HCT116 (cell line): ENCODE measurements at regions of chr1 and their contacts with region 1.

Region 1: GRCh38 chr1:87131809-87132283 is 196.8 kb upstream of the LMO4 start:
- DNase-seq: peak; percentile 35
- ATAC-seq: peak; percentile 99
- H3K4me3 ChIP-seq: peak overlapping the region; percentile 21 to 39; a peak in 3 of 4 replicates
- H3K27ac ChIP-seq: no peak overlapping the region
- H3K4me1 ChIP-seq: peaks cover 0 to 4% of the 10 kb centered on the region in 2 experiments; a peak in 1 of 4 replicates
- H3K27me3 ChIP-seq: no peaks in the 10 kb centered on the region
- CTCF ChIP-seq: peak; percentile 64 to 89 (median 85)
- POLR2A ChIP-seq: no peak
- RAD21 ChIP-seq: peak; percentile 95

Region 2: DNA sequence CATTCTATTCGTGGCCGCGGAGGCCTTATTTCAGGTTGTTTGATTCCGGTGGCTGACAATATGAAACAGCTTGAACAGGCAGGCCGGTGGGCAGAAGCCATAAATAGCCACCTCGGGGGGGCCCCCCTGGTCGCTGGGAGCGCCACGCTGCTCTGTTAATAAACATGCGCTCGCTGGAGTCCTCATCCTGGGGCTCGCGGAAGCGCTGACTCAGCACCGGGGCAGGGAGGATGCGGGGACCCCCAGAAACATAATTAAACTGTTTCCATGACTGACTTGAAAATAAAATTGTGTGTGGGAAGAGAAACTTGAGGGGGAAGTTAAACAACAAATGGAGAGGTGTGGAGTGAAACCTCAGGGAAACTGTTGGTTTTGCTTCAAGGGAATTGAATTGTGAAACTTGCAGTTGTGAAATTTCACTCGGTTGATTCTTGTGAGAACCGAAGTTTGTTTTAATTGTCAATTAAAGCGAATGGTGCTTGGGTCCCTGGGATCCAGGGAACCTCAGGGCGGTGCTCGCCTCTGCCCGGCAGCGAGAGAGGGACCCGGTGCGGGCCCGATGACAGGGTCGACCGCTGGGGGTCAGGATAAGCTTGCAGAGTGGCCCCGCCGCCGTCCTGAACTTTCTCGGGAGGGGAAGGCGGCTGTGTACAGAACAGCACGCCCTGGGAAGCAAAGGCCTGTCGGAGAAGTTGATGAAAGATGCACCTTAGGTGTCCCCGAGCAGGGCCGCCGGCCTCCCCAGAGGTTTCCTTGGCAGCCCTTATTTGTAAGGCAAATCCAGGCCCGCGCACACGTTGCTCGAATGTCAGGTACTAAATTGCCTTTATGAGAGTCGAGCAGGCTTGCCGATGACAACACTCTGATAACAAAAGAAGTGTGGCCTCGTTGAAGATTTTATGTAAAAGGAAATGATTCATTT is 19.9 kb after region 1 on chr1:
- CTCF ChIA-PET with region 1: no interaction called
- POLR2A ChIA-PET with region 1: no interaction called
- RAD21 ChIA-PET with region 1: no interaction called
- intact Hi-C with region 1: no loop called
- DNase-seq: no peak
- ATAC-seq: no peak
- H3K4me3 ChIP-seq: no peak overlapping the region
- H3K27ac ChIP-seq: no peak overlapping the region
- H3K4me1 ChIP-seq: no peaks in the 10 kb centered on the region
- H3K27me3 ChIP-seq: 0 out of 2 replicates have a peak, but pooled peaks cover 3% of the 10 kb centered on the region
- CTCF ChIP-seq: no peak
- POLR2A ChIP-seq: no peak
- RAD21 ChIP-seq: no peak

Region 3: GRCh38 chr1:87279966-87280535 is 148.2 kb after region 1 on chr1:
- CTCF ChIA-PET with region 1: no interaction called
- POLR2A ChIA-PET with region 1: no interaction called
- RAD21 ChIA-PET with region 1: no interaction called
- intact Hi-C with region 1: loop called (anchors 2 kb)
- DNase-seq: peak; percentile 10
- ATAC-seq: peak; percentile 65
- H3K4me3 ChIP-seq: no peak overlapping the region
- H3K27ac ChIP-seq: no peak overlapping the region
- H3K4me1 ChIP-seq: no peaks in the 10 kb centered on the region
- H3K27me3 ChIP-seq: no peaks in the 10 kb centered on the region
- CTCF ChIP-seq: peak in 2 of 3 experiments; percentile 15 to 46; a peak in 3 of 6 replicates
- POLR2A ChIP-seq: no peak
- RAD21 ChIP-seq: peak; percentile 48

Region 4: DNA sequence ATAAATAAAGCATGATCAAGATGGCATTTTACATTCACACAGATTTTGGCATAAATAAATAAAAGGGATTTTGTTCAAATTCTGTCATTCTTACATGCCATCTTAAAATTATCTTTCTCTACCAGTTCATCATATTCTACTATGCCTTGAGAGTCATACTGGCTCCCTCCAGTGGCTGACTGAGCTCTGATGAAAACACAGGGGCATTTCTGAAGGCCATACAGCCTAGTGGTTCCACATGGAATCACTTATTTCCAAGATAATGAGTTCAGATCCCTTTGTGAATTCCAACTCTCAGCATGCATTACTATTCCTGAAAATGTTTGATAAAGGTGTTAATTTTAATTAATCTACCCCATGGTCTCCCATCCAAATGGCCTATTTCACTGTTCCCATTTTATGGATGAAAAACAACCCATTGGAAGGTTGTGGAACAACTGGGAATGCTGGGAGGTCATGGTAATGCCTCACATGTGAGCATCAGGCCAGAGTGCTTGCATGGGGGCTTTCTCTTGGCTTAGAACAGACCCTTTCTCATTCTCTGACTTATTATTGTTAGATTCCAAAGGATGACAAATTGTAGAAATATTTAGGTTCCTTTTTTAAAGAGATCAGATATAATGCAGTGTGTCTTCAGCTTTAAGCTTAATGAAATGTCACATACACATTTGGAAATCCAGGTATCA is 929.8 kb after region 1 on chr1:
- CTCF ChIA-PET with region 1: no interaction called
- POLR2A ChIA-PET with region 1: no interaction called
- RAD21 ChIA-PET with region 1: no interaction called
- intact Hi-C with region 1: loop called (anchors 5 kb)
- DNase-seq: peak; percentile 61
- ATAC-seq: peak; percentile 96
- H3K4me3 ChIP-seq: no peak overlapping the region
- H3K27ac ChIP-seq: no peak overlapping the region
- H3K4me1 ChIP-seq: no peaks in the 10 kb centered on the region
- H3K27me3 ChIP-seq: no peaks in the 10 kb centered on the region
- CTCF ChIP-seq: peak; percentile 88 to 92 (median 89)
- POLR2A ChIP-seq: no peak
- RAD21 ChIP-seq: peak; percentile 74

Region 5: GRCh38 chr1:88302843-88303486 is 1171.1 kb after region 1 on chr1:
- CTCF ChIA-PET with region 1: no interaction called
- POLR2A ChIA-PET with region 1: no interaction called
- RAD21 ChIA-PET with region 1: no interaction called
- intact Hi-C with region 1: loop called (anchors 1 kb)
- DNase-seq: no peak
- ATAC-seq: peak; percentile 50; the same call in 1 of the 2 replicates
- H3K4me3 ChIP-seq: no peak overlapping the region
- H3K27ac ChIP-seq: no peak overlapping the region
- H3K4me1 ChIP-seq: no peaks in the 10 kb centered on the region
- H3K27me3 ChIP-seq: no peaks in the 10 kb centered on the region
- CTCF ChIP-seq: peak in 2 of 3 experiments; percentile 38 to 54; a peak in 2 of 6 replicates
- POLR2A ChIP-seq: no peak
- RAD21 ChIP-seq: peak; percentile 67

Region 6: DNA sequence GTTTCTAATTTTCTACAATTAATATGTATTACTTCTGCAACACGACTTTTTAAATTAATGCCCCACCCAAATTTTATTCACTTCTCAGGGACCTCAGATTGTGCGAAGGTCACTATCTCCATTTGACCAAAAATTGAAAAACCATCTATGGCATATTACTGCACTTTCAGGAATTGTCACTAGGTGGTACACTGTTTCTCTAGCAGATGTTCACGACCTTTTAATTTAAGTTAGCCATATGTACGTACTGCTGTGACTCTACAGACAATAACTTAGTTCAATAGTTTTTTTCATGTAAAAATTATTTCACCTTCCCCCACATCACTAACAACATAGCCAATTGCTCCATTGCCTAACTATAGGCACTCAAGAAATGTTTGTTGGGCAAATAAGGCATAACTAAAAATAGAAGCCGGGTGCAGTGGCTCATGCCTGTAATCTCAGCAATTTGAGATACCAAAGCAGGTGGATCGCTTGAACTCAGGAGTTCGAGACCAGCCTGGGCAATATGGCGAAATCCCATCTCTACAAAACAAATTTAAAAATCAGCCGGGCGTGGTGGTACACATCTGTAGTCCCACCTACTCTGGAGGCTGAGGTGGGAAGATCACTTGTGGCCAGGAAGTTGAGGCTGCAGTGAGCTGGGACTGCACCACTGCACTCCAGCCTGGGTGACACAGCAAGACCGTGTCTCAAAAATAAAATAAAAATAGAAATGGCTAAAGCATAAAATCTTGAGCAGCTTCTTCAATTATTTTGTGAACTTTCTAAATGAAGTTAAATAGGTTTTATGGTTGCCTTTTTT is 1476.5 kb after region 1 on chr1:
- CTCF ChIA-PET with region 1: no interaction called
- POLR2A ChIA-PET with region 1: no interaction called
- RAD21 ChIA-PET with region 1: no interaction called
- intact Hi-C with region 1: loop called (anchors 10 kb)
- DNase-seq: peak; percentile 32
- ATAC-seq: peak; percentile 82
- H3K4me3 ChIP-seq: no peak overlapping the region
- H3K27ac ChIP-seq: no peak overlapping the region
- H3K4me1 ChIP-seq: peaks cover 3 to 18% of the 10 kb centered on the region in 2 experiments; a peak in 3 of 4 replicates
- H3K27me3 ChIP-seq: no peaks in the 10 kb centered on the region
- CTCF ChIP-seq: peak; percentile 32 to 69 (median 64); a peak in 5 of 6 replicates
- POLR2A ChIP-seq: no peak
- RAD21 ChIP-seq: peak; percentile 58